ENCODE measurements at regions of chr14 and their contacts with region 1.

Region 1: DNA sequence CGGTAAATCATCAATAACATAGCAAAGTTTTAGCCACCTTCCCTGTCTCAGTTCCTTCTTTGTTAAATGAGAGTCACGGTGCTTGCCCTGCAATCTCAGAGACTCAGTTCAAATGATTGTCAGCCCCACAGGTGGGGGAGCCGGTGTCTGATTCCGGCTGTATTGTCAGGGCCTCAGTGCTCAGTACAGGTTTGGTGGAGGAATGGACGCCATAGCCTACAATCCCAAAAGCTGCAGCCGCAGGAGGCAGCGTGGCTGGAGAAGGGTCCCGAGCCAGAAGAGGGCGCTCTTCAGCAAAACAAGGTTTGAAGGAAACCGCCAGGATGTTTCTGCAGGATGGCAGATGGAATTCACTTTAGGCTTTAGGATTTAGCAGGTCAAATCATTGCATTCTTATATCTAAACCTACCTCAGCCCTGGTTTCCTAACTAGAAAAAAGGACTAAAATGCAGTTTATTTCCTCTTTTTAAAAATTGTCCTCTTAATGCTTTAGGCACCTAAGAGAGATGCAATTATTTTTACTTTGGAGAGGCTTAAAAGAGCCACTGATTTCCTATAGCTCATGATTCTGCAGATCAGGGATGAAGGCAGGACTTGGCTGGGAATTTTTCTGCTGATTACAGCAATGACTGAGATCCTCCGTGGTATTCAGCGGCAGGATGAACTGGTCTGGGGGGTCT is 29.2 kb downstream of the FOS start:
- DNase-seq: peak; percentile 84
- H3K4me3 Mint-ChIP-seq: no peak overlapping the region
- H3K27ac Mint-ChIP-seq: no peak overlapping the region
- H3K4me1 Mint-ChIP-seq: peaks cover 13% of the 10 kb centered on the region
- H3K27me3 Mint-ChIP-seq: peaks cover 5% of the 10 kb centered on the region

Region 2: GRCh38 chr14:74913986-74914573 is 393.8 kb before region 1 on chr14:
- CTCF ChIA-PET with region 1: interaction called, 3 read pairs
- POLR2A ChIA-PET with region 1: no interaction called
- intact Hi-C with region 1: loop called (anchors 1 kb)
- DNase-seq: peak; percentile 23
- H3K4me3 Mint-ChIP-seq: no peak overlapping the region
- H3K27ac Mint-ChIP-seq: no peak overlapping the region
- H3K4me1 Mint-ChIP-seq: no peaks in the 10 kb centered on the region
- H3K27me3 Mint-ChIP-seq: no peaks in the 10 kb centered on the region

Region 3: GRCh38 chr14:75132382-75133086 is 175.3 kb before region 1 on chr14:
- CTCF ChIA-PET with region 1: interaction called, 280 read pairs
- POLR2A ChIA-PET with region 1: no interaction called
- intact Hi-C with region 1: loop called (anchors 1 kb)
- DNase-seq: peak; percentile 37
- H3K4me3 Mint-ChIP-seq: no peak overlapping the region
- H3K27ac Mint-ChIP-seq: peak overlapping the region; percentile 50
- H3K4me1 Mint-ChIP-seq: peaks cover 18% of the 10 kb centered on the region
- H3K27me3 Mint-ChIP-seq: no peaks in the 10 kb centered on the region

Region 4: GRCh38 chr14:75452900-75453747 is 145.3 kb after region 1 on chr14:
- CTCF ChIA-PET with region 1: interaction called, 11 read pairs
- POLR2A ChIA-PET with region 1: no interaction called
- intact Hi-C with region 1: loop called (anchors 1 kb)
- DNase-seq: no peak
- H3K4me3 Mint-ChIP-seq: no peak overlapping the region
- H3K27ac Mint-ChIP-seq: no peak overlapping the region
- H3K4me1 Mint-ChIP-seq: no peaks in the 10 kb centered on the region
- H3K27me3 Mint-ChIP-seq: no peaks in the 10 kb centered on the region

Region 5: DNA sequence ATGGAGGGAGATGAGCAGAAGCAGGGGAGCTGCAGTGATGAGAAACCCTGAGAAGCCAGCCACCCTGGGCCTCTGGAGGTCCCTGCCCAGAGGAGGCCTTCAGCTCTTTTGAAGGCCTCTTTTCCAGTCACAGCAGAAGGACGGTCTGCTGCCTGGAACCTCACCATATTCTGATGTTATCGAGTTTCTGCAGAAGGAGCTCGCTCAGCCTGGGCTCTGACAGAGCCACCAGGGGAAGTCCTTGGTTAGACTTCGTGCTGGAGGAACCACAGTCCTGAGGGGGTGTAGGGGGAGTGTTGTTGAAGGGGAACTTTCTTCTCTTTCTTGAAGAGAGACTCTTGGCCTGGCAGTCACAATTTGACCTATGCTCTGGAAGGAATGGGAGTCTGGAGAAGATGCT is 189.4 kb after region 1 on chr14:
- CTCF ChIA-PET with region 1: interaction called, 10 read pairs
- POLR2A ChIA-PET with region 1: no interaction called
- intact Hi-C with region 1: no loop called
- DNase-seq: peak; percentile 75
- H3K4me3 Mint-ChIP-seq: peak overlapping the region; percentile 59
- H3K27ac Mint-ChIP-seq: peak overlapping the region; percentile 82
- H3K4me1 Mint-ChIP-seq: peaks cover 54% of the 10 kb centered on the region
- H3K27me3 Mint-ChIP-seq: no peaks in the 10 kb centered on the region

Region 6: DNA sequence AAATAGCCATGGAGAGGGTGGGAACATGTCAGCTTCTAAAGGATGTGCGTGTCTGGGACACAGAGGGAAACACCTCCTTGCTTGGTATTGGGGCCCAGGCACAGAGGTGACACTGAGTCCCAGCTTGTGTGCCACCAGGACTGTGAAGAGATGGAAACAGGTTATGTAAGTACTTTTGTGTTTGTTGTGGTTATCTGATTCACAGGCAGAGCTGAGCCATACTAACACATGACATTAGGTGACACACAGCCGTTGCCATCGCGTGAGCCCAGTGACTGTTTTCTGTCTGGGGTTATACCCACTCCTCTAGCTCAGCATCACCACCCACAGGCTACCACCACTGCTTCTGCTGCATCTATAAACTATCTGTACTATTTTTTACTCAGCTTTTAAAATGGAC is 258.5 kb after region 1 on chr14:
- CTCF ChIA-PET with region 1: interaction called, 7 read pairs
- POLR2A ChIA-PET with region 1: interaction called, 3 read pairs
- intact Hi-C with region 1: loop called (anchors 1 kb)
- DNase-seq: peak; percentile 94
- H3K4me3 Mint-ChIP-seq: peak overlapping the region; percentile 72
- H3K27ac Mint-ChIP-seq: peak overlapping the region; percentile 93
- H3K4me1 Mint-ChIP-seq: peaks cover 90% of the 10 kb centered on the region
- H3K27me3 Mint-ChIP-seq: no peaks in the 10 kb centered on the region

Region 7: GRCh38 chr14:75654127-75654732 is 346.4 kb after region 1 on chr14:
- CTCF ChIA-PET with region 1: interaction called, 24 read pairs
- POLR2A ChIA-PET with region 1: no interaction called
- intact Hi-C with region 1: loop called (anchors 1 kb)
- DNase-seq: peak; percentile 89
- H3K4me3 Mint-ChIP-seq: no peak overlapping the region
- H3K27ac Mint-ChIP-seq: no peak overlapping the region
- H3K4me1 Mint-ChIP-seq: peaks cover 16% of the 10 kb centered on the region
- H3K27me3 Mint-ChIP-seq: no peaks in the 10 kb centered on the region